SK-N-SH (cell line): ENCODE measurements at regions of chr3 and their contacts with region 1.

Region 1: GRCh38 chr3:21484057-21484827 is 266.8 kb downstream of the ZNF385D start:
- DNase-seq: peak; percentile 22
- H3K4me3 ChIP-seq: no peak overlapping the region
- H3K27ac ChIP-seq: no peak overlapping the region
- H3K4me1 ChIP-seq: peaks cover 0 to 3% of the 10 kb centered on the region in 2 experiments; a peak in 1 of 4 replicates
- H3K27me3 ChIP-seq: no peaks in the 10 kb centered on the region
- CTCF ChIP-seq: peak; percentile 73
- EP300 ChIP-seq: no peak
- RAD21 ChIP-seq: peak; percentile 92

Region 2: DNA sequence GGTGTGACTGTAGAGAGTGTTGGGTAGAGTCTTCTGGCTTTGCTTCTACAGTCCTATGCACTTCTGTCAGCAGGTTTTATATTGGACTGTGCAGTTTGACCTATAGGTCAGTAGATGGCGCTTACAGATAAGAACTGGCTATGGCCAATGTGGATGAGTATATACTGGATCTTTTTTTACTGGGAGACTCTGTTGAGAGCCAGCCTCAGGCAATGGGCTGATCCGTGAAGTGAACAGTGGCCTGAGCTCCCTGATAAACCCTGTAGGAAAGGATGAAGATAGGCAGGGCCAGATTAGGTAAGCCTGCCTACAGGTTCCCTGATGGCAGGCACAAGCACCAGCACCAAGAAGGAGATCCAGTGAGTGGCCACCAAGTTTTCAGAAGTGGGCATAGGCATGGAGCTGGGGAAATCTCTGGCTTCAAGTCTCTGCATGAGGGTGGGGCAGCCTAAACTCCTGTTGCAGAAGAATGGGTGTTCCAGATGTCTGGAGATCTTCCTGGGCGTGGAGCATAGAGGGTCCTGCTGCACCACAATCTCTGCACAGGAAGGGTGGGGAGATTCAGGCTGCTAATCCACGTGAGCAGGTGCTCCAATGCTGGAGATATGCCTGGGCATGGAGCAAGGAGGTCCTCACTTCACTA is 972.3 kb before region 1 on chr3:
- CTCF ChIA-PET with region 1: interaction called, 11 read pairs
- POLR2A ChIA-PET with region 1: no interaction called
- DNase-seq: peak; percentile 49
- H3K4me3 ChIP-seq: no peak overlapping the region; a peak in 2 of 4 replicates
- H3K27ac ChIP-seq: no peak overlapping the region
- H3K4me1 ChIP-seq: no peaks in the 10 kb centered on the region
- H3K27me3 ChIP-seq: no peaks in the 10 kb centered on the region
- CTCF ChIP-seq: peak; percentile 89
- EP300 ChIP-seq: 0 out of 4 replicates have a peak, but pooled peaks of 1 of the 2 experiments have one; percentile 29
- RAD21 ChIP-seq: peak; percentile 94